Activated CD4-positive, alpha-beta T cell treated with anti-CD3 and anti-CD28 coated beads, Interleukin-2, amount 10 ng/mL, durations not matched to agents 24 days and 14 days (primary cell): ENCODE measurements at regions of chr2 and their contacts with region 1.

Region 1: GRCh38 chr2:73176881-73177644 is 25.3 kb upstream of the NOTO start:
- DNase-seq: peak; percentile 96
- H3K4me3 Mint-ChIP-seq: peak overlapping the region; percentile 88
- H3K27ac Mint-ChIP-seq: peak overlapping the region; percentile 43
- H3K4me1 Mint-ChIP-seq: peaks cover 22% of the 10 kb centered on the region
- H3K27me3 Mint-ChIP-seq: peaks cover 64% of the 10 kb centered on the region

Region 2: DNA sequence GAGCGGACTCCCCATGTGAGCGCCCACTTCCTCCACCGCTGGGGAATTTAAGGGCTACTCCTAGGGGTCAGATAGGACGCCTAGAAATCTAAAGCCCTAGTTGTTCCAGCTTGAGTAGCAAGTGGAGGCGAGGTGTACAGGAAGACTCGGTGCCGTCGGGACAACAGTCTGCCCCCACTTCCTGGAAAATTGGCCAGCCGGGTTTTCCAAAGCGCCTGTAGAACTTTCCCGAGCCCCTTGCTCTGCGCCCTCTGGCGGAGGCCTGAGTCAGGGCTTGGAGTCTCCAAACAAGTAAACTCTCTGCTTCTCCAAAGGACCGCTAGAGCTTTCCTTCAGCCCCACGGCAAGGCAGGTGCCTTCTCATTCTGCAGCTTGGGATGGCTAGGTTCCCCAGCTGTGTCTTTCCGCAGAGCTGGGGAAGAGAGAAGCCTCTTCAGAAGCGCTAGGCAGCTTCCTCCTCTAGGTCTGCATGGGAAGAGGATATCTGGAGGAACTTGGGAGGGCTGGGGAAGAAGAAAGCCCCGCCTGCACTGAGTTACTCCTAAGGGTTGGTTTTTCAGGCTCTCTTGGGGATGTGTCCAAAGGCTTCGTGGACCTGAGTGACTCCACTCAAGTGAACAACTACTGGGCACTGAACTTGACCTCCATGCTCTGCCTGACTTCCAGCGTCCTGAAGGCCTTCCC is 289.2 kb before region 1 on chr2:
- intact Hi-C with region 1: loop called (anchors 1 kb)
- DNase-seq: peak; percentile 85
- H3K4me3 Mint-ChIP-seq: peak overlapping the region; percentile 81
- H3K27ac Mint-ChIP-seq: no peak overlapping the region
- H3K4me1 Mint-ChIP-seq: peaks cover 4% of the 10 kb centered on the region
- H3K27me3 Mint-ChIP-seq: peaks cover 34% of the 10 kb centered on the region

Region 3: GRCh38 chr2:72993147-72993932 is 183.7 kb before region 1 on chr2:
- intact Hi-C with region 1: loop called (anchors 1 kb)
- DNase-seq: peak; percentile 86
- H3K4me3 Mint-ChIP-seq: no peak overlapping the region
- H3K27ac Mint-ChIP-seq: no peak overlapping the region
- H3K4me1 Mint-ChIP-seq: no peaks in the 10 kb centered on the region
- H3K27me3 Mint-ChIP-seq: no peaks in the 10 kb centered on the region

Region 4: DNA sequence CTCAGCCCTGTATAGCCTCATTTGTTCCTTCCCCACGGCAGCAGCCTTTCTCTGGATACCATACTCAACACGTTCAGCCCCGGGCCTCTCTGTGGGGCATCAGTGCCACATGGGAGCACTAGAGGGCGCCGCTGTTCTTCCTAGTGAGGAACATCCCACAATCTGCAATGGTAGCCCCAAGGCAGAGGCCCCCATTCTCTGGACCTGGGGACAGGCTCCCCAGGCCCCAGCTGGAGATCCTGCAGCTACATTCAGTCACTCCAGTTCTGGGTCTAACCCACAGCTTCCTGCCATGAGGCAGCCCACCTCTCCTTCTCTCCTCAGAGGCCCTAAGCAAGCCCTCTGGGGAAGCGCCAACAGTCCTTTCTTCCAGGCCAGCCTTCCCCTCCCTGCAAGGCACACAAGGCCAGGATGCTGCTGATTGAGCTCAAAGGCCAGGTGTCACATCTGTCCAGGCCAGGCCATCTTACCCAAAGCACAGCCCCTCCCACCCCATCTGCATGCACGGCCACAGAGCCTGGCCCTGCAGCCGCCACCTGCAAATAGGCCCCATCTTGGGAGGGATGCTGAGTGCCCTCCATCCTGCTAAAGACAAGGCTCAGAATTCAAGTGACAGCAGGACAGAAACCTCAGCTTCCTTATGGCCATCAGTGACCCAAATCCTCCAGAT is 91.2 kb before region 1 on chr2:
- intact Hi-C with region 1: loop called (anchors 1 kb)
- DNase-seq: peak; percentile 95
- H3K4me3 Mint-ChIP-seq: no peak overlapping the region
- H3K27ac Mint-ChIP-seq: no peak overlapping the region
- H3K4me1 Mint-ChIP-seq: peaks cover 4% of the 10 kb centered on the region
- H3K27me3 Mint-ChIP-seq: no peaks in the 10 kb centered on the region

Region 5: DNA sequence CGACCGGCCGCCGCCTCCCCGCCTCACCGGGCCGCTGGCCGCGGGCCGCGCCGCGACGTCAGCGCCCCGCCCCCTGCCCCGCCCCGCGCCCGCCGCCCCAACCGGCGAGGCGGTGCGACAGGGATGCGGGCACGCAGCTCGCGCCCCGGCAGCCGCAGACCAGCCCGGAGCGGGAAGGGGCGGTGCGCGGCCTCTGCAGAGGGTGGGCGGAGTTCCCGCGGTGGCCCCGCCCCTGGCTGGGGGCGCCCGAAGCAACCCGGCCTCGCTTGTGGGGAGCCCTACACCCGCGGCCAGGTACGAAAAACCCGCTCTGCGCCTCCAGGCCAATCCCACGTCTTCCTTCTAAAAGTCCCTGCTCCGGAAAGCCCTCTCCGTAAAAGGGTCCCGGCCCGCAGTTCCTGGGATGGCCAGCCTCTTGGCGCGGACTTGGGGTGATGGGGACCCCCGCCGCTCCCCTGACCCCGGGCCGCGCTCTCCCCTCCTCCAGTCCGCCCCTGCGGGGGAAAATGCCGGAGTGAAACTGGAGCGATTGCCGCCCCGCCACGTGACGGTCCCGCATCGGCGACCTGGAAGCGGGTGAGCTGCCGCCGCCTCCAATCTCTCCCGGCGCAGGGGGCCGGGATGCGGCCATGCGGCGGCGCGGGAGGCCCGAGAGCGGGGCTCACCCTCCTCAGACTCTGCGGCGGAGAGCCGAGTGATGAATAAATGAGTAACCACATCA is 64.0 kb before region 1 on chr2 and contains the start of gene RAB11FIP5:
- intact Hi-C with region 1: loop called (anchors 1 kb)
- DNase-seq: peak; percentile 95
- H3K4me3 Mint-ChIP-seq: peak within 1 kb of the TSS; percentile 88
- H3K27ac Mint-ChIP-seq: peak within 1 kb of the TSS; percentile 59
- H3K4me1 Mint-ChIP-seq: peaks cover 25% of the 10 kb centered on the region
- H3K27me3 Mint-ChIP-seq: peaks cover 11% of the 10 kb centered on the region
- total RNA-seq, gene RAB11FIP5: 13.4 and 13.8 TPM in 2 replicates

Region 6: GRCh38 chr2:73163483-73164367 is 13.3 kb before region 1 on chr2:
- intact Hi-C with region 1: loop called (anchors 1 kb)
- DNase-seq: peak; percentile 89
- H3K4me3 Mint-ChIP-seq: no peak overlapping the region
- H3K27ac Mint-ChIP-seq: no peak overlapping the region
- H3K4me1 Mint-ChIP-seq: peaks cover 1% of the 10 kb centered on the region
- H3K27me3 Mint-ChIP-seq: peaks cover 9% of the 10 kb centered on the region

Region 7: GRCh38 chr2:73212448-73213176 is 35.5 kb after region 1 on chr2:
- intact Hi-C with region 1: loop called (anchors 1 kb)
- DNase-seq: peak; percentile 91
- H3K4me3 Mint-ChIP-seq: no peak overlapping the region
- H3K27ac Mint-ChIP-seq: peak overlapping the region; percentile 34
- H3K4me1 Mint-ChIP-seq: peaks cover 22% of the 10 kb centered on the region
- H3K27me3 Mint-ChIP-seq: peaks cover 6% of the 10 kb centered on the region

Region 8: GRCh38 chr2:73324126-73324725 is 147.2 kb after region 1 on chr2:
- intact Hi-C with region 1: no loop called
- DNase-seq: peak; percentile 18
- H3K4me3 Mint-ChIP-seq: no peak overlapping the region
- H3K27ac Mint-ChIP-seq: no peak overlapping the region
- H3K4me1 Mint-ChIP-seq: no peaks in the 10 kb centered on the region
- H3K27me3 Mint-ChIP-seq: peaks cover 21% of the 10 kb centered on the region

Region 9: DNA sequence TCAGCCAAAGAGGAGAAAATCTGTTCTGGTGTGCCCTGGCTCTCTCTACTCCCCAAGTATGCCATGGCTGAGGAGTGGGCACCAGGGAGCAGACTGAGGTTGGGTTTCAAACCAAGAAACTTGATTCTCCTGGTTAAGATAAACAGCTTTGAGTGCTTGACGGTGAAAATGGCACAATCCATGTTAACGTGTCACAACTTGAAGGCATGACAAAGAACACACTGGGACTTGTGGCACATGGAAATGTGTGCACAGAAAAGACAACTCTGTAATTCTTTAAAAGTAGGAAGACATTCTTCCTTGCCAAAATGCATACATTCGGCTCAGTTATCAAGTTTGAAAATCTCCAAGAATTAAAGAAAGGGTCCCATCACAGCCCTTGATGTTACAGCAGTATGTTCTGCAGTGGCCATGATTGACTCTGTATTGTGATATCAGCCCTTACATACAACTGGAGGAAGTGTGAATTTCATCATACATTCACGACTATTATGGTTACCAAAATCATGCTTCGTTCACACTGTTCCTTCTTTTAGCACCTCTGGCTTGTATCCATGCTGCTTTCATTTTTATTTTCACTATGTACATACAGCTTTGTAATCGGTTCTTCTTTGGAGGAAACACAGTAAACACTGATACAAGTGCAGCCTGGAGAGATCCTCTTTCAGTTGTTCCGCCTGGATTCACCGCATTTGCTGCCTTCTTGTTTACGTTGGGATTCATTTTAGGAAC is 700.2 kb after region 1 on chr2:
- intact Hi-C with region 1: no loop called
- DNase-seq: no peak
- H3K4me3 Mint-ChIP-seq: no peak overlapping the region
- H3K27ac Mint-ChIP-seq: no peak overlapping the region
- H3K4me1 Mint-ChIP-seq: peaks cover 6% of the 10 kb centered on the region
- H3K27me3 Mint-ChIP-seq: peaks cover 5% of the 10 kb centered on the region